ENCODE measurements at regions of chr6 and their contacts with region 1.

Region 1: GRCh38 chr6:109526905-109527628 is 44.0 kb upstream of the ZBTB24 start:
- DNase-seq: peak; percentile 22
- H3K4me3 ChIP-seq: no peak overlapping the region
- H3K27ac ChIP-seq: no peak overlapping the region
- H3K4me1 ChIP-seq: no peaks in the 10 kb centered on the region
- H3K27me3 ChIP-seq: no peaks in the 10 kb centered on the region
- CTCF ChIP-seq: peak; percentile 32 to 47 (median 43)
- EP300 ChIP-seq: no peak
- POLR2A ChIP-seq: no peak

Region 2: GRCh38 chr6:110053395-110054240 is 526.6 kb after region 1 on chr6:
- in situ Hi-C with region 1: loop called in 2 of 4 experiments (anchors 10 to 25 kb)
- intact Hi-C with region 1: no loop called
- DNase-seq: no peak
- H3K4me3 ChIP-seq: no peak overlapping the region
- H3K27ac ChIP-seq: no peak overlapping the region
- H3K4me1 ChIP-seq: no peaks in the 10 kb centered on the region
- H3K27me3 ChIP-seq: no peaks in the 10 kb centered on the region
- CTCF ChIP-seq: peak; percentile 41 to 64 (median 63)
- EP300 ChIP-seq: no peak
- POLR2A ChIP-seq: no peak

Measured in transverse colon (tissue), 4 donors.